ENCODE measurements at regions of chr12 and their contacts with region 1.

Region 1: GRCh38 chr12:54294152-54294952 is 6.5 kb downstream of the NFE2 start:
- DNase-seq: peak; percentile 32 to 68 (median 40)
- H3K4me3 ChIP-seq: no peak overlapping the region
- H3K4me3 Mint-ChIP-seq: no peak overlapping the region
- H3K27ac ChIP-seq: peak overlapping the region; percentile 80
- H3K27ac Mint-ChIP-seq: peak overlapping the region in 2 of 8 donors; percentile 47 to 74
- H3K4me1 ChIP-seq: peaks cover 3% of the 10 kb centered on the region
- H3K4me1 Mint-ChIP-seq: peaks cover 4 to 6% (median 6%) of the 10 kb centered on the region in 3 donors
- H3K27me3 ChIP-seq: no peaks in the 10 kb centered on the region
- H3K27me3 Mint-ChIP-seq: peaks cover 2 to 12% of the 10 kb centered on the region in 2 donors

Region 2: DNA sequence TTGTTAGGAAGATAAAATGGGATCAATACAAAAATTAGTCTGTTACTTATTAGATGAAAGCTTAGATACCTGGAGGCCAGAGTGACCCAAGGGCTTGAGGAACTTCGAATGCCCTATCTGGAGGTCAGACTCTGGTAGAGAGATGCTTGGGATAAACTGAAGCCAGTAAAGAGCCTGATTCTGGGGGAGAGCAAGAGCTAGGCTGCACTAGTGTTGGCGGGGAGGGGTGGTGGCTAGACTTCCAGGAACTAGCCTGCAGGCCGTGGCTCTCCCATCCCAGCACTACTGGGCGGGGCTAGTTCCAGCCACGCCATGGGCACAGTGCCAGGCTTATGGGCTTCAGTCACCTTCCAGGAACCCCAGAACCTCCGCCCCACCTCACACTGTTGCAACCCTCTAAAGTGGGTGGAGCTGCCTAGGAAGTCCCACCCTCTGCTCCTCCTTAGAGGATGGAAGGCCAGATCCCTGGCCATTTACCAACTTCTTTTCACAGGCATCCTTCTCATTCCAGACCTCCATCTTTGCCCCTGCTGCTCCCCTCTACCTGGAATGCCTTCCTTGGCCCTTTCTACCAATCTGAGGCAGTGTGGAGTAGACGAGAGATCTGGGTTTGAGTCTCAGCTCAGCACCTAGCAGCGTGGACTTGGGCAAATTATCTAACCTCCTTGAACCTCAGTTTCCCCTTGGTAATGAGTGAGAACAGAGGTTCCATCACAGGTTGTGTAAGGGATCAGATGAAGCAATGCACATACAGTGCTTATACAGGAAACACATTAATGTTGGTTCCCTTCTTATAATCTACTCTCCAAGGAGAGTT is 12.8 kb after region 1 on chr12:
- CTCF ChIA-PET with region 1: interaction called, 12 read pairs
- POLR2A ChIA-PET with region 1: interaction called, 5 read pairs
- DNase-seq: peak in 1 of 5 donors; percentile 16
- H3K4me3 ChIP-seq: no peak overlapping the region
- H3K4me3 Mint-ChIP-seq: peak overlapping the region in 2 of 7 donors; percentile 41 to 47
- H3K27ac ChIP-seq: no peak overlapping the region
- H3K27ac Mint-ChIP-seq: peak overlapping the region in 5 of 8 donors; percentile 22 to 88 (median 61)
- H3K4me1 ChIP-seq: peaks cover 9% of the 10 kb centered on the region
- H3K4me1 Mint-ChIP-seq: peaks cover 19 to 37% (median 33%) of the 10 kb centered on the region in 3 donors
- H3K27me3 ChIP-seq: peaks cover 6% of the 10 kb centered on the region
- H3K27me3 Mint-ChIP-seq: peaks cover 12 to 37% of the 10 kb centered on the region in 2 donors

Region 3: GRCh38 chr12:54368709-54369583 is 74.6 kb after region 1 on chr12:
- CTCF ChIA-PET with region 1: interaction called, 21 read pairs
- POLR2A ChIA-PET with region 1: no interaction called
- DNase-seq: peak; percentile 75 to 91 (median 80)
- H3K4me3 ChIP-seq: peak overlapping the region; percentile 56
- H3K4me3 Mint-ChIP-seq: peak overlapping the region; percentile 34 to 77 (median 62)
- H3K27ac ChIP-seq: no peak overlapping the region
- H3K27ac Mint-ChIP-seq: peak overlapping the region in 7 of 8 donors; percentile 10 to 86 (median 62)
- H3K4me1 ChIP-seq: peaks cover 21% of the 10 kb centered on the region
- H3K4me1 Mint-ChIP-seq: peaks cover 22 to 34% (median 28%) of the 10 kb centered on the region in 3 donors
- H3K27me3 ChIP-seq: no peaks in the 10 kb centered on the region
- H3K27me3 Mint-ChIP-seq: peaks cover 0 to 2% of the 10 kb centered on the region in 2 donors